SK-N-SH (cell line): ENCODE measurements at regions of chr1 and their contacts with region 1.

Region 1: DNA sequence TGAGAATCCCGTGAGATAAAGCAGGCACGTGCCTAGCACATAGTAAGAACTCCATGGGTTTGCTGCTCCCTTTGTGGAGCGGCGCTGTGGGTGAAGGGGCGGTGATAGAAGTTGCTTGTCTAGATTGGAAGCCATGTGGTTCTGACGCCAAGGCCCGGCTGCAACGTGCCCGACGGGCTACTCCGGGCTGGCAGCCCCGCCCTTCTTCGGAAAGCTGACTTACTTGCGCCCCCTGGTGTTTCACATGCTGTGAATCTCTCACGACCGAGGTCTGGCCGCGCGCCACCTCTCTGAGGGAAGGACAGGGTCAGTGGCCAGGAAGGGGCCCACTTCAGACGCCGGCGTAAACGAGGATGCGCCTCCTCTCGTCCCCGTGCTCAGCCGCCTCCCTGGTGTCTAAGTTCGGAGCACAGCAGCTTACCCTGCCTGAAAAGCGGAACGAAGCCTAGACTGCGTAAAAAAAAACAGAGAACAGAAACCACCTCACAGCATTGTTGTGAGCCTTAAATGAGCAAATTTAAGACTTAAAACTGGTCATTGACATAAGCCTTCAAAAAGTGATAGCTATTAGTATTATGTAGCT is 42.6 kb upstream of the WNT2B start:
- DNase-seq: peak; percentile 85
- H3K4me3 ChIP-seq: peak overlapping the region; percentile 24 to 35; a peak in 3 of 4 replicates
- H3K27ac ChIP-seq: peak overlapping the region in 1 of 2 experiments; percentile 15; a peak in 1 of 4 replicates
- H3K4me1 ChIP-seq: peaks cover 6 to 9% of the 10 kb centered on the region in 2 experiments; a peak in 2 of 4 replicates
- H3K27me3 ChIP-seq: no peaks in the 10 kb centered on the region
- CTCF ChIP-seq: peak; percentile 80
- EP300 ChIP-seq: no peak
- RAD21 ChIP-seq: peak; percentile 79

Region 2: GRCh38 chr1:112395821-112396652 is 70.1 kb before region 1 on chr1 and contains the start of gene CTTNBP2NL:
- CTCF ChIA-PET with region 1: interaction called, 154 read pairs
- POLR2A ChIA-PET with region 1: interaction called, 4 read pairs
- DNase-seq: peak; percentile 95
- H3K4me3 ChIP-seq: peak within 1 kb of the TSS; percentile 96 to 97
- H3K27ac ChIP-seq: peak within 1 kb of the TSS; percentile 90 to 98
- H3K4me1 ChIP-seq: peaks cover 15 to 23% of the 10 kb centered on the region in 2 experiments
- H3K27me3 ChIP-seq: no peaks in the 10 kb centered on the region
- CTCF ChIP-seq: no peak
- EP300 ChIP-seq: no peak; a peak in 1 of 4 replicates
- RAD21 ChIP-seq: no peak
- polyA plus RNA-seq, gene CTTNBP2NL: 4.9 and 7.5 TPM in 2 replicates

Region 3: DNA sequence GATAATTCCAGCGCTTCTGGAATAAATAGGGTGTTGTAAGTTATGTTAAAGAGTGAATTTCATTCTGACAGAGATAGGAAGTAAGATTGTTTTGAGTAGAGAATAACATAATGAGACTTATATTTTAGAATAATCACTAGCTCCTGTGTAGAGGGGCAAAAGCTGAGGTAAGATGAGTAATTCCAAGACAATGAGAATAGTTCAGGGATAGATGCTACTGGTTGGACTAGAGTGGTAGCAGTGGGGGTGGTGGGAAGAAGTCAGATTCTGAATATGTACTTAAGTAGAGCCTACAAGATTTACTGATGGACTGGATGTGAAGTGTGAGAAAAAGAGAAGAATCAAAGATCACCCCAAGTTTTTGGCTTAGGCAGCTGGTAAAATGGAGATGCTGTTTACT is 185.0 kb after region 1 on chr1:
- CTCF ChIA-PET with region 1: no interaction called
- POLR2A ChIA-PET with region 1: no interaction called
- DNase-seq: no peak
- H3K4me3 ChIP-seq: no peak overlapping the region
- H3K27ac ChIP-seq: no peak overlapping the region
- H3K4me1 ChIP-seq: no peaks in the 10 kb centered on the region; a peak in 1 of 4 replicates
- H3K27me3 ChIP-seq: no peaks in the 10 kb centered on the region
- CTCF ChIP-seq: no peak
- EP300 ChIP-seq: no peak
- RAD21 ChIP-seq: no peak